Sigmoid colon (tissue), 7 donors: ENCODE measurements at regions of chr10 and their contacts with region 1.

Region 1: GRCh38 chr10:7410862-7411670 is at the start of gene SFMBT2:
- DNase-seq: peak; percentile 78
- H3K4me3 ChIP-seq: peak within 1 kb of the TSS; percentile 39 to 68 (median 60)
- H3K27ac ChIP-seq: peak within 1 kb of the TSS; percentile 60 to 80 (median 76)
- H3K4me1 ChIP-seq: peaks cover 0 to 58% (median 52%) of the 10 kb centered on the region in 4 donors
- H3K27me3 ChIP-seq: peaks cover 24 to 69% (median 55%) of the 10 kb centered on the region in 3 donors
- CTCF ChIP-seq: no peak
- EP300 ChIP-seq: no peak
- POLR2A ChIP-seq: no peak
- total RNA-seq, gene SFMBT2: 4.2 to 6.4 (median 4.9) TPM

Region 2: GRCh38 chr10:6416892-6417512 is 994.1 kb before region 1 on chr10:
- intact Hi-C with region 1: loop called (anchors 10 kb)
- DNase-seq: no peak
- H3K4me3 ChIP-seq: no peak overlapping the region
- H3K27ac ChIP-seq: no peak overlapping the region
- H3K4me1 ChIP-seq: no peaks in the 10 kb centered on the region
- H3K27me3 ChIP-seq: no peaks in the 10 kb centered on the region
- CTCF ChIP-seq: peak in 3 of 4 experiments; percentile 55 to 68 (median 58)
- EP300 ChIP-seq: no peak
- POLR2A ChIP-seq: no peak

Region 3: GRCh38 chr10:6580279-6581029 is 830.6 kb before region 1 on chr10:
- intact Hi-C with region 1: loop called (anchors 10 kb)
- DNase-seq: peak; percentile 72
- H3K4me3 ChIP-seq: peak overlapping the region; percentile 33 to 63 (median 47)
- H3K27ac ChIP-seq: peak overlapping the region in 2 of 4 donors; percentile 16 to 17
- H3K4me1 ChIP-seq: peaks cover 0 to 4% (median 3%) of the 10 kb centered on the region in 4 donors
- H3K27me3 ChIP-seq: peaks cover 0 to 42% (median 5%) of the 10 kb centered on the region in 3 donors
- CTCF ChIP-seq: peak in 1 of 4 experiments; percentile 43
- EP300 ChIP-seq: no peak
- POLR2A ChIP-seq: no peak

Region 4: GRCh38 chr10:6678211-6678803 is 732.8 kb before region 1 on chr10:
- intact Hi-C with region 1: loop called (anchors 10 kb)
- DNase-seq: no peak
- H3K4me3 ChIP-seq: no peak overlapping the region
- H3K27ac ChIP-seq: no peak overlapping the region
- H3K4me1 ChIP-seq: no peaks in the 10 kb centered on the region
- H3K27me3 ChIP-seq: peaks cover 0 to 4% (median 0%) of the 10 kb centered on the region in 3 donors
- CTCF ChIP-seq: peak; percentile 14 to 48 (median 42)
- EP300 ChIP-seq: no peak
- POLR2A ChIP-seq: no peak

Region 5: DNA sequence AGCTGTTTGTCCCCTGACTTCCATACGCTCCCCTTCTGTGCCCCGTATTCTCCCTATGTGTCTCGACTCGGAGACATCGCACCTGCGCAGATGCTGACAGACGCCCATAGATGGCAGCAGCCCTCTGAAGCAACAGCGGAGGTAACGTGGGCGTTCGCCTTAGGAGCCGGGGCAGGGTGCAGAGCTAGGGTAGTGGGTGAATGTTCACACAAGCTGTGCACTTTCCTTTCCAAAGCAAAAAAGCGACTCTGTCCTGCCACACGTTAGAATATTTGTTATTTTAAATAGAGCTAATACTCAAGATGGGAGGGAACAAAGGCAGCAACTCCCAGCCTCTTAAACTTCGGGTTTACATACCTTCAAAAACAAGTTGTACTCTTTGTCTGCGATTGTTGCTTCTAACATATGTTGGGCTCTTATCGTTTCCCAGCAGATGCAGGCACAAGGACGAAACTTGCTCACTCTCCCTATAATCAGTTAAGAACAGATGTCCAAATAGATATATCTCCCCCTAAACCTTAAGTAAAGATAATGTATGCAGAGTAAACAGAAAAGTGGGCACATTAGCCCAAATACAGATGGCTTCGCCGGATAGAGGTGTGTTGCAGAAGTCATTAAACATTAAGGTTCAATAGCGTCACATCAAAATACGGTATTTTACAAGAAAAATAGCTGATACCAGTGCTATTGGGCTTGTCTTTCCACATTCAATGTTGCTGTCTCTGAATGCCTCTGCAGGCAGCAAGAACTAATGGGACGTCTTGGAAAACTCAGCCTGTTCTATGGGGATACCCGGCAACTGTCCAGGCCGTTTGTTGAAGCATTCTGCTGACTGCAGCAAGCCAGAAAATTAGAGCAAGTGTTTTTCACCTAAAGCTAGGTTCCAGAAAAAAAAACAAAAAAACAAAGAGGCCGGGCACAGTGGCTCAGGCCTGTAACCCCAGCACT is 490.7 kb before region 1 on chr10:
- intact Hi-C with region 1: loop called (anchors 5 kb)
- DNase-seq: peak; percentile 82
- H3K4me3 ChIP-seq: no peak overlapping the region
- H3K27ac ChIP-seq: no peak overlapping the region
- H3K4me1 ChIP-seq: peaks cover 0 to 10% (median 8%) of the 10 kb centered on the region in 4 donors
- H3K27me3 ChIP-seq: peaks cover 0 to 12% (median 0%) of the 10 kb centered on the region in 3 donors
- CTCF ChIP-seq: peak; percentile 13 to 56 (median 34)
- EP300 ChIP-seq: no peak
- POLR2A ChIP-seq: no peak

Region 6: GRCh38 chr10:7085913-7086589 is 325.0 kb before region 1 on chr10:
- intact Hi-C with region 1: loop called (anchors 5 kb)
- DNase-seq: no peak
- H3K4me3 ChIP-seq: no peak overlapping the region
- H3K27ac ChIP-seq: no peak overlapping the region
- H3K4me1 ChIP-seq: peaks cover 0 to 21% (median 12%) of the 10 kb centered on the region in 4 donors
- H3K27me3 ChIP-seq: peaks cover 0 to 27% (median 6%) of the 10 kb centered on the region in 3 donors
- CTCF ChIP-seq: no peak
- EP300 ChIP-seq: no peak
- POLR2A ChIP-seq: no peak

Region 7: GRCh38 chr10:7260412-7260900 is 150.6 kb before region 1 on chr10:
- intact Hi-C with region 1: loop called (anchors 2 kb)
- DNase-seq: peak; percentile 93
- H3K4me3 ChIP-seq: no peak overlapping the region
- H3K27ac ChIP-seq: peak overlapping the region; percentile 7 to 78 (median 58)
- H3K4me1 ChIP-seq: peaks cover 0 to 34% (median 25%) of the 10 kb centered on the region in 4 donors
- H3K27me3 ChIP-seq: no peaks in the 10 kb centered on the region
- CTCF ChIP-seq: peak; percentile 63 to 81 (median 74)
- EP300 ChIP-seq: peak in 3 of 4 donors; percentile 16 to 69 (median 51)
- POLR2A ChIP-seq: no peak

Region 8: GRCh38 chr10:7378602-7379403 is 32.3 kb before region 1 on chr10:
- intact Hi-C with region 1: no loop called
- DNase-seq: peak; percentile 2
- H3K4me3 ChIP-seq: no peak overlapping the region
- H3K27ac ChIP-seq: no peak overlapping the region
- H3K4me1 ChIP-seq: no peaks in the 10 kb centered on the region
- H3K27me3 ChIP-seq: no peaks in the 10 kb centered on the region
- CTCF ChIP-seq: no peak
- EP300 ChIP-seq: no peak
- POLR2A ChIP-seq: no peak

Region 9: DNA sequence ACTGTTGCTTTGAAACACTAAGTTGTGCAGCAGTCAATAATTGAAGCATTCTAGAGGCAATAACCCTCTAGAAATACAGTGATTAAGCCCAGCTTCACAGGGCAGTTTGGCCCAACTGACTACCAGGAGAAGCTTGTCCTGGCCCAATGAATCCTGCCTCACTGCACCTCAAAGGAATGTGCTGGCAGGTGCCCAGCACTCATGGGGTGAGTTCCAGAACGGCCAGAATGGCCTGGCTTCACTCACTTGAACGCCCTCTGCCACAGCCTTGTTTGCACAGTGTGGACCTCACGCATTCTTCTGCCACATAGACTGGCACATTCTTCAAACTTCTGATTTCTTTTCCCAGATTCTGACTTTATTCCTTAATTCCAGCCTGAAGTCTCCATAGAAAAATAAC is 285.5 kb after region 1 on chr10:
- intact Hi-C with region 1: no loop called
- DNase-seq: peak; percentile 65
- H3K4me3 ChIP-seq: no peak overlapping the region
- H3K27ac ChIP-seq: peak overlapping the region in 3 of 4 donors; percentile 7 to 58 (median 56)
- H3K4me1 ChIP-seq: peaks cover 0 to 22% (median 19%) of the 10 kb centered on the region in 4 donors
- H3K27me3 ChIP-seq: no peaks in the 10 kb centered on the region
- CTCF ChIP-seq: no peak
- EP300 ChIP-seq: no peak
- POLR2A ChIP-seq: no peak